ENCODE measurements at regions of chr16 and their contacts with region 1.

Region 1: GRCh38 chr16:29848420-29849297 is 14.4 kb downstream of the CDIPT start:
- DNase-seq: peak; percentile 92
- ATAC-seq: peak; percentile 64

Region 2: DNA sequence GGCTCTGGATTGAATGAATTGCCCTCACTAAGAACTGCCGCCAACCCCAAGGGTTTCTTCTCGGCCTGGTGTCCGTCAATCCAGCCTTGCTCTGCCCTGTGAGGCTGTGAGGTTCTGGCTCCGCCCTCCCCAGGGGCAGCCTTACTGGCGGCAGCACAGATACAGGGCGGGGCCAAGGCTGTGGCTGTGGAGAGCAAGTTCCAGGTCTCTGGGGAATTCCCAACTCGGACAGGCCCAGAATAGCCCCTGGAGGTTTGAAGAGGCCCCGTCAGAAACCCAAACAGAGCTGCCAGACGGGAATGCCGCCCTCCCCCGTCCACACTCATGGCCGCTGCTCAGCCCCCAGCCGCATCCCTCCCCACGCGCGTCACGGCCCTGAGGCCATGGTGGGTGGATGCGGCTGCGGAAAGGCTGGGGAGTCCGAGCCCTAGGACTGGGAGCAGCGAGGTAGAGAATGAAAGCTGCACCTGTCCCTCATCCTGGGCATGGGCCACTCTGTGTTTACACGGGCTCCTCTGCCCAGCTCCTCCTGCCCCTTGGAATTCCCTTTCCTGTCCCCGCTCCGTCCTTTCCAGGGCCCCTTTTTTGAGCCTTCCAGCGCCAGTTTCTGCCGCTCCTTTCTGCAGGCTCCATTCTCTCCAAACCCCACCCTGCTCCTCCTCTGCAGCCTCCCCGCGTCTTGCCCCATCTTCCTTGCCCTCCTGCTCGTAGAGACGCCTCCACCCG is 37.3 kb before region 1 on chr16:
- intact Hi-C with region 1: loop called (anchors 5 kb)
- DNase-seq: peak; percentile 99
- ATAC-seq: peak; percentile 78

Region 3: DNA sequence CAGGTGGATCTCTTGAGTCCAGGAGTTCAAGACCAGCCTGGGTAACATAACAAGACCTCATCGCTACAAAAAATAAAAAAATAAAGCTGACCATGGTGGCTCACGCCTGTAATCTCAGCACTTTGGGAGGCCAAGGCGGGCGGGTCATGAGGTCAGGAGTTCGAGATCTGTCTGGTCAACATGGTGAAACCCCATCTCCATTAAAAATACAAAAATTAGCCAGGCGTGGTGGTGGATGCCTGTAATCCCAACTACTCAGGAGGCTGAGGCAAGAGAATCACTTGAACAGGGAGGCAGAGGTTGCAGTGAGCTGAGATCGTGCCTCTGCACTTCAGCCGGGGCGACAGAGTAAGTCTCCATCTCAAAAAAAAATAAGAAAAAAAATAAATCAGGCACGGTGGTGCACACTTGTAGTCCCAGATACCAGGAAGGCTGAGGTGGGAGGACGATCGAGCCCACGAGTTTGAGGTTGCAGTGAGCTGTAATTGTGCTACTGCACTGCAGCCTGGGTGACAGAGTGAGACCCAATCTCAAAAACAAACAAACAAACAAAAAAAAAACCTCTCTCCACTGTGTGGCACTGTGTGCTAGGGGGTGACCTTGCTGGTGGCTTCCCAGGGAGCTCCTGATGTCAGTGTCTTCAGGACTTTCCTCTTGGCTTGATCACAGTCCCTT is 294.1 kb after region 1 on chr16:
- intact Hi-C with region 1: no loop called
- DNase-seq: no peak
- ATAC-seq: no peak

Measured in Right ventricle myocardium inferior (tissue), 1 donor.